IMR-90 (cell line): ENCODE measurements at regions of chr1 and their contacts with region 1.

Region 1: DNA sequence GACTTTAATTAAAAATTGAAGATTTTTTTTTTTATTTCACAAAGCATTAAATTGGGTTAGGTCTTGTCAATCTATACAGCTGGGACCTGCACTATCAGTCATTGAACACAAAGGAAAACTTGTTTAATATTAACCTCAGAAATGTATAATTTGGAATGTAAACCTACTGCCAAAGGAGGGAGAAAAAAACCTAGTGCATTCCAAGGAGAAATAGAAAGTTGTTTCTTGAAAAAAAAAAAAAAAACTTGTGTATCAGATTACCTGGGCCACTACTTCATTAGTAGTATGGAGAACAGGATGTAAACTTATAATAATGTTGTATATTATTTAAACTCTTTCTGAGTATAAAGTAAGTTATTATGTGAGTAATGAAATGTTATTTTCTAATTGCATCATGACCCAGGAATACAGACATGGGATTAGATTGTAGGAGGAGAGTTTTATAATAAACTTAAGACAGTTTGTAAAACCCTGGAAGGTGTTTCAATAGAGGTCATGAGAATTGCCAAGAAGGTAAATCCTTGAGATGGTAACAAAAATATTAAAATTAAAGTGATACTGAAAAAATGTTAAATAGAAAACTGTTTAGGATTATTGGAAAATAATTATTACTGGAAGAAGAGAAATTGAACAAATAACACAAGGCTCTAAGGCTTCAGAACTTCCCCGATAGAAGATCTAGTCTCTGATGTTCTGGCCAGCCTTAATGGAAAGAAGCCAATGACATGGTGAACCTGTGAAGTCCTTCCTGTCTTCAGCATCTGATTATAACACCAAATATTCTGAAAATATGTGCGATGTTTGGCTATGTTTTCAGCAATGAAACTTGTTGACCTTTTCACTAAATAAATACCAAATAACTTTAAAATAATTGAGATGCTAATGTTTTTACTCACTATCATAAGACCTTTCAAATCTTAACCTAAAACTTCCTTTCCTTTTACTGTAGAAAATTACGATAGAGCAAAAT is 412.8 kb upstream of the LYPLAL1 start:
- DNase-seq: peak; percentile 54
- ATAC-seq: peak; percentile 62
- H3K4me3 ChIP-seq: no peak overlapping the region
- H3K27ac ChIP-seq: no peak overlapping the region
- H3K4me1 ChIP-seq: peaks cover 6% of the 10 kb centered on the region
- H3K27me3 ChIP-seq: no peaks in the 10 kb centered on the region
- CTCF ChIP-seq: no peak
- POLR2A ChIP-seq: no peak
- RAD21 ChIP-seq: no peak

Region 2: DNA sequence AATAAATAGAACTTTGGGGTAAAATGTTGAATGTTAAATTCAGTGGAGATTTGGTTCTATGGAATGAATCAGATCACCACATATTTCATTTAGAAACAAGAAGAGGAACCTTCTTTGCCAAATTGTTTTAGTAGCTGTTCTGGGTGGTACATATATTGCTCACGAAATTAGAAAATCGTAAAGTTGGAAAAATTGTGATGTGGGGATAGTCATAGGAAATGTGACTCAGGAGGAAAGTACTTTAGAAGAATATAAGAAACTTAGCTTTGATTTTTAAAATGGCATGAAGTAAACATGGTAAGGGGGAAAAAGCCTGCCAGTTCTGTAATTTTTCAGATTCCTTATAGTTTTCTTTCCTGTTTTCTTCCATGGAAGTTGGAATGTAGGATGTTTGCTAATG is 448.4 kb before region 1 on chr1:
- CTCF ChIA-PET with region 1: no interaction called
- POLR2A ChIA-PET with region 1: no interaction called
- dilution Hi-C with region 1: no loop called
- in situ Hi-C with region 1: no loop called
- intact Hi-C with region 1: no loop called
- DNase-seq: peak; percentile 38
- ATAC-seq: 0 out of 2 replicates have a peak, but pooled peaks have one; percentile 32
- H3K4me3 ChIP-seq: no peak overlapping the region
- H3K27ac ChIP-seq: no peak overlapping the region
- H3K4me1 ChIP-seq: peaks cover 5% of the 10 kb centered on the region; the same call in 1 of the 2 replicates
- H3K27me3 ChIP-seq: no peaks in the 10 kb centered on the region
- CTCF ChIP-seq: no peak
- POLR2A ChIP-seq: no peak
- RAD21 ChIP-seq: no peak

Region 3: GRCh38 chr1:218686258-218686657 is 74.6 kb before region 1 on chr1:
- CTCF ChIA-PET with region 1: no interaction called
- POLR2A ChIA-PET with region 1: no interaction called
- dilution Hi-C with region 1: no loop called
- in situ Hi-C with region 1: no loop called
- intact Hi-C with region 1: loop called (anchors 2 kb)
- DNase-seq: peak; percentile 79
- ATAC-seq: peak; percentile 90
- H3K4me3 ChIP-seq: no peak overlapping the region
- H3K27ac ChIP-seq: peak overlapping the region; percentile 19; the same call in 1 of the 2 replicates
- H3K4me1 ChIP-seq: no peaks in the 10 kb centered on the region
- H3K27me3 ChIP-seq: no peaks in the 10 kb centered on the region
- CTCF ChIP-seq: no peak
- POLR2A ChIP-seq: no peak
- RAD21 ChIP-seq: no peak